GM18951 (cell line): ENCODE measurements at regions of chr20 and their contacts with region 1.

Region 1: DNA sequence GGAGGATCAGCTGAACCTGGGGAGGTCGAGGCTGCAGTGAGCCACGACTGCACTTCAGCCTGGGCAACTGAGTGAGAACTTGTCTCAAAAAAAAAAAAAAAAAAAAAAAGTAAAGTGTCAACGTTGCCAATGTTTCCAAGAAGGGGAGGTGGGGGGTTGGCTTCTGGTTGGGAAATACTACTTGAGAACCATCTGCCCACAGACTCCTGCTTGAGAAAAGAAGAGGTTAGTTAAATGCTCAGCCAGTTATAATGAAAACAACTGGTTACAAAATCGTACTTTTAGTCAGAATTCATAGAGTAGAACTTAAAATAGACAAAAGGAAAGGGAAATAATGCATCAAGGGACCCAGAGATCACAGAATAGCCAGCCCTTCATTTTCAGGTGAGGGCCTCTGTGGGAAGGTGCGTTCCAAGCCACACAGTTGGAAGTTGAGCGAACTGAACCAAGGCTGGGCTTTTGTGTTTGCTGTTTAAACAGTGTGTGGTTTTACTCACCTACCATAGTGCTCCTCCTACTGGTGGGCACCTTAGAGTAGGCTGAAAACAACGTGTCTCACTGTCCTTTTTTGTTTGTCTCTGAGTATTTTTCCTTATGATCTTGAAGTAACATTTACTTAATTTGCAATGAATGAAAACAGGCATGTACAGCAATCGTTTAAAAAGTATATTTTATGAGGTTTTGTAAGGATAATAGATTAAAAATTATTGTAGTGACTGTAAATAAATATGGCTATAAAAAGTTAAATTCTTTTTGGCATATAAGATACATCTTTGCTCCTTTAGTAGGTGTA is 200.7 kb downstream of the BCAS1 start:
- POLR2A ChIP-seq: no peak

Region 2: GRCh38 chr20:53738039-53738944 is 131.4 kb before region 1 on chr20:
- in situ Hi-C with region 1: loop called (anchors 10 kb)
- POLR2A ChIP-seq: no peak

Region 3: DNA sequence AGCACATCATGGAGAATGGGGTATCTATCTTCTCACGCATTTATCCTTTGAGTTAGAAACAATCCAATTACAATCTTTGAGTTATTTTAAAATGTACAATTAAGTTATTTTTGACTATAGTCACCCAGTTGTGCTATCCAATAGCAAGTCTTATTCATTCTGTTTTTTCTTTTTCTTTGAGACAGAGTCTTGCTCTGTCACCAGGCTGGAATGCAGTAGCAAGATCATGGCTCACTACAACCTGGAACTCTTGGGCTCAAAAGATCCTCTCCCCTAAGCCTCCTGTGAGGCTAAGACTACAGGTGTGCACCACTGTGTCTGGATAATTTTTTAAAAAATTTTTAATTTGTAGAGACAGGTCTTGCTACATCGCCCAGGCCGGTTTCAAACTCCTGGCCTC is 74.5 kb before region 1 on chr20:
- in situ Hi-C with region 1: no loop called
- POLR2A ChIP-seq: no peak